PC-9 (cell line): ENCODE measurements at regions of chr1 and their contacts with region 1.

Region 1: GRCh38 chr1:183635606-183636333 is at the start of gene ARPC5:
- DNase-seq: peak; percentile 89 to 96
- H3K4me3 ChIP-seq: peak within 1 kb of the TSS; percentile 98
- H3K27ac ChIP-seq: peak within 1 kb of the TSS; percentile 69
- H3K4me1 ChIP-seq: peaks cover 36% of the 10 kb centered on the region
- H3K27me3 ChIP-seq: no peaks in the 10 kb centered on the region
- CTCF ChIP-seq: no peak
- total RNA-seq, gene ARPC5: 143 and 150 TPM in 2 replicates

Region 2: DNA sequence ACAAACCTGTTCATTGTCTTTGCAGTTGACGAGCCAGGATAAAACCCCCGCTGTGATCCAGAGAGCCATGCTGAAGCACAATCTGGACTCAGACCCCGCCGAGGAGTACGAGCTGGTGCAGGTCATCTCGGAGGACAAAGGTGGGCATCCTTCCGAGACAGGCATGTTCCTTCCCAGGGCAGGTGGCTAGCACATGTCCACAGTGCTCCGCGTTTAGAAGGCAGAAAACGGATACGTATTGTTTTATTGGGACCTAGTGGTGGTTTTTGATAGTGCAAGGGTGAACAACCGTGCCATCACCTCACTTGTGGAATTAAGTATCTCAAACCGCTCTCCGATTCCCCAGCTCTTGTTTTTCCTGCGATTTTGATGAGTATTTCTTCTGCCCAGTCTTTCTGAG is 286.4 kb after region 1 on chr1:
- CTCF ChIA-PET with region 1: no interaction called
- POLR2A ChIA-PET with region 1: no interaction called
- intact Hi-C with region 1: no loop called
- DNase-seq: no peak
- H3K4me3 ChIP-seq: no peak overlapping the region
- H3K27ac ChIP-seq: no peak overlapping the region
- H3K4me1 ChIP-seq: no peaks in the 10 kb centered on the region
- H3K27me3 ChIP-seq: no peaks in the 10 kb centered on the region
- CTCF ChIP-seq: peak; percentile 34; the same call in 1 of the 2 replicates

Region 3: GRCh38 chr1:184056921-184057496 is 421.2 kb after region 1 on chr1:
- CTCF ChIA-PET with region 1: no interaction called
- POLR2A ChIA-PET with region 1: no interaction called
- intact Hi-C with region 1: loop called (anchors 2 kb)
- DNase-seq: peak; percentile 47 to 70
- H3K4me3 ChIP-seq: no peak overlapping the region
- H3K27ac ChIP-seq: peak overlapping the region; percentile 62
- H3K4me1 ChIP-seq: peaks cover 34% of the 10 kb centered on the region
- H3K27me3 ChIP-seq: no peaks in the 10 kb centered on the region
- CTCF ChIP-seq: no peak